Endothelial cell of umbilical vein (primary cell): ENCODE measurements at regions of chr9 and their contacts with region 1.

Region 1: GRCh38 chr9:36995927-36996705 is 38.0 kb downstream of the PAX5 start:
- DNase-seq: peak; percentile 68
- H3K4me3 ChIP-seq: no peak overlapping the region
- H3K27ac ChIP-seq: no peak overlapping the region
- H3K4me1 ChIP-seq: no peaks in the 10 kb centered on the region
- H3K27me3 ChIP-seq: peaks cover 10 to 18% of the 10 kb centered on the region in 2 experiments
- CTCF ChIP-seq: peak; percentile 68 to 90
- POLR2A ChIP-seq: no peak

Region 2: DNA sequence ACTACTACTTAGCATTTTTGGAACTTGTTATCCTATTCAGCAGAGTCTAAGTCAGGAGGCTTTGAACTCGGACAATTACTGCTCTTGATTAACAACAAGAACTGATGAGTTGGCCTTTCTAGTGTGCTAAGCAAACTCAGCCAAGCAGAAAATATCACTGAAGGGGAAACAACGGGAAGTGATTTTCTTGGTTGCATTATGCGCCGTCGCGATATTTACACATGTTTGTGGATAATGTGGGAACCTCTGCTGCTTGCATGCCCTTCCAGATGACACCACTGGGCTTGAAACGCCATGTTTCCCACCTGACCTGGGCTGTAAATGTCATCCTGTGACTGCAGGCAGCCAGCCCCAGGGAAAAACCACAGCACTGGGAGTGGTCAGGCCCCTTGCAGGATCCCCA is 167.5 kb before region 1 on chr9:
- CTCF ChIA-PET with region 1: no interaction called
- POLR2A ChIA-PET with region 1: no interaction called
- dilution Hi-C with region 1: no loop called
- intact Hi-C with region 1: no loop called
- DNase-seq: no peak
- H3K4me3 ChIP-seq: no peak overlapping the region
- H3K27ac ChIP-seq: no peak overlapping the region
- H3K4me1 ChIP-seq: no peaks in the 10 kb centered on the region
- H3K27me3 ChIP-seq: peaks cover 2 to 19% of the 10 kb centered on the region in 2 experiments
- CTCF ChIP-seq: no peak
- POLR2A ChIP-seq: no peak

Region 3: DNA sequence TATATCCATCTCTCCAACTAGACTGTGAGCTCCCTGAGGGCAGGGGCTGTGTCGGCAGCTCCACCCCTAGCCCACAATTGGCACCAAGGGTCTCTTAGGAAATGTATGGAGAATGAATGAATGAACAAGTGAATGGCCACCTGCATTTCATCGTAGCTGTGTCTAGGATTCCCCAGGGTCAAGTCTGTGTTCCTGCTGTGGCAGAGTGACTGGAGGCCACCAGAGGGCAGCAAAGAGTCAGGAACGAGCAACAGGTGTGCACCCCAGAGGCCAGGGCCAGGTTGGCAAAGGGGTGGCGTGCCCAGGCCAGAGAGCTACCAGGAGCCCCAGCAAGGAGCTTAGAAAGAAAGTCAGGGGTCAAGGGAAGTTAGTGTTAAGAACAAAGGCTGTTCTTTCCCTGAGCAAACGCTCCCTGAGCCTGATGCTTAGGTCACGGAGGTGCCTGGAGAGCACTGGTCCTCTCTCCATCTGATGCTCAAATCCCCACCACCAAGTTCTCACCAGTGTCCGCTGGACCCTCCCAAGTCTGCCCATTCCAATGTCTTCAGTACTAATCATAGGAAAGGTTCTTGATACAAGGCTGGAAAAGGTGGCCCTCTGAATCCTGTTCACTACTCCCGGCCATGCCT is 122.8 kb before region 1 on chr9:
- CTCF ChIA-PET with region 1: interaction called, 81 read pairs
- POLR2A ChIA-PET with region 1: no interaction called
- dilution Hi-C with region 1: no loop called
- intact Hi-C with region 1: loop called (anchors 1 kb)
- DNase-seq: peak; percentile 43
- H3K4me3 ChIP-seq: no peak overlapping the region
- H3K27ac ChIP-seq: no peak overlapping the region
- H3K4me1 ChIP-seq: no peaks in the 10 kb centered on the region
- H3K27me3 ChIP-seq: peaks cover 4 to 16% of the 10 kb centered on the region in 2 experiments
- CTCF ChIP-seq: peak; percentile 80 to 90
- POLR2A ChIP-seq: no peak

Region 4: DNA sequence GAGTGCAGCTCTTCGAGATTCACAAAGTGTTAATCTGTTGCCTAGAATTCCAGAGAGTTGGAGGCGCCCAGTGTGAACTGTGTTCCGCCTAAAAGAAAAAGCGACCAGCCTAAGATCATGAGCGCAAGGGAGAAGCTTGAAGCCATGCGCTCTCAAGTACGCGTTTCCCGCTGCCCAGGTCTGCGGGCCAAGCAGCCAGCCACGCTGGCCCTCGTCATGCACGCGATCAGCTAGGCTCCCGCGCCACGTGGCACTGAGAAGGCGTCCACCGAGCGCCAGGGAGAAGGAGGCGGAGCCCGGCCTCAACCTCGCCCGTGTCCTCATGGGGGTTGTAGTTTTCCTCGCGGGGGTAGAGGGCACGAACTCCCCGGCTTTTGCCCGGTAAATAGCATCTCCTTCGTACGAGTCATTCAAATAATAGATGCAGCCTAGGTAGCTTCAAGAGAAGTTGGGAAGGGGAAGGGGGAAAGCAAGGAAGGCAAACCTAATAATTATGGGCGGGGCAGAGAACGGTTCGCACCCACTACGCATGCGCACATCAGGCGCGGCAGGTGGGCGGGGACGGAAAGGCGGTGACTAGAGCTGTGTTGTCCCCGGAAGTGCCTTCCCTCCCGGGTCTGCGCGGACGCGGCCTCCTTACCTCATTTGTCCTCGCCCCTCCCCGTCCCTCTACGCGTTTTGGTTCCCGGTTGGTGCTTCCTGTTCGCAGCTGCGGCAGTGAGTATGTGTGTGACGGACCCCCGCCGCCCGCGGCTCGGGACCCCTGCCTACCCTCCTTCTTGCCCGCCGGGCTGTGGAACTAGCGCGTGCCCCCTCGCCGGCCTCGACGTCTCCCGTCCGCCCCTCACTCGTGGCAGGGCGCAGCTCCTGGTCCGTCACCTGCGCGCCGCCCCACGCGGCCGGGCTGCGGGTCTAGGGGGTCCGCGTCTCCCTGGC is 124.1 kb after region 1 on chr9 and contains the start of gene ZCCHC7:
- CTCF ChIA-PET with region 1: interaction called, 20 read pairs
- POLR2A ChIA-PET with region 1: no interaction called
- dilution Hi-C with region 1: no loop called
- intact Hi-C with region 1: no loop called
- DNase-seq: peak; percentile 94
- H3K4me3 ChIP-seq: peak within 1 kb of the TSS; percentile 69 to 91 (median 83)
- H3K27ac ChIP-seq: peak within 1 kb of the TSS; percentile 72
- H3K4me1 ChIP-seq: peaks cover 9% of the 10 kb centered on the region
- H3K27me3 ChIP-seq: no peaks in the 10 kb centered on the region
- CTCF ChIP-seq: no peak
- POLR2A ChIP-seq: peak; percentile 66
- total RNA-seq, gene ZCCHC7: 14.8 and 17.3 TPM in 2 replicates

Region 5: DNA sequence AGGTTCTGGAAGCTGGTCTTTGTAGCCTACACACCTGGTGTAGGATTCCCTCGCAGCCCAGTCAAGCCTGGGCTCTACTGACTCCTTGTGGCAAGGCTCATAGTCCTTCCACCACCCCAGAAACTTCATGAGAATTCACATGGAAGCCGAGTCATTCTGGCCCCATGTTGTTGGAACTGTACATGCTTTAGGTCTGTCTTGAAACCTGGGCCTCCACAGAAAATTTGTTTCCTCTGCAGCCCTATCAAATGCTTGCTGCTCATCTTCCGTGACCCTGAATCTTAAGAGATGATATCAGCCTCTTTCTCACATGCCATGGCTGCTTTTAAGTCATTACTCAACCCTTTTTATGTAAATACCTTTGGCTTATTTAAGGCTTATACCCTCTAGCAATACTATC is 313.0 kb after region 1 on chr9:
- CTCF ChIA-PET with region 1: interaction called, 3 read pairs
- POLR2A ChIA-PET with region 1: no interaction called
- dilution Hi-C with region 1: no loop called
- intact Hi-C with region 1: loop called (anchors 1 kb)
- DNase-seq: no peak
- H3K4me3 ChIP-seq: no peak overlapping the region
- H3K27ac ChIP-seq: no peak overlapping the region
- H3K4me1 ChIP-seq: no peaks in the 10 kb centered on the region
- H3K27me3 ChIP-seq: no peaks in the 10 kb centered on the region
- CTCF ChIP-seq: peak; percentile 13 to 18
- POLR2A ChIP-seq: no peak

Region 6: GRCh38 chr9:37390759-37391158 is 394.6 kb after region 1 on chr9:
- CTCF ChIA-PET with region 1: interaction called, 18 read pairs
- POLR2A ChIA-PET with region 1: no interaction called
- dilution Hi-C with region 1: no loop called
- intact Hi-C with region 1: no loop called
- DNase-seq: no peak
- H3K4me3 ChIP-seq: no peak overlapping the region
- H3K27ac ChIP-seq: no peak overlapping the region
- H3K4me1 ChIP-seq: no peaks in the 10 kb centered on the region
- H3K27me3 ChIP-seq: no peaks in the 10 kb centered on the region
- CTCF ChIP-seq: peak; percentile 18 to 30
- POLR2A ChIP-seq: no peak

Region 7: GRCh38 chr9:37602817-37603216 is 606.7 kb after region 1 on chr9:
- CTCF ChIA-PET with region 1: no interaction called
- POLR2A ChIA-PET with region 1: no interaction called
- dilution Hi-C with region 1: no loop called
- intact Hi-C with region 1: no loop called
- DNase-seq: no peak
- H3K4me3 ChIP-seq: no peak overlapping the region
- H3K27ac ChIP-seq: no peak overlapping the region
- H3K4me1 ChIP-seq: no peaks in the 10 kb centered on the region
- H3K27me3 ChIP-seq: peaks cover 13 to 25% of the 10 kb centered on the region in 2 experiments
- CTCF ChIP-seq: no peak
- POLR2A ChIP-seq: no peak